CD4-positive, alpha-beta T cell (primary cell): ENCODE measurements at regions of chr5 and their contacts with region 1.

Region 1: DNA sequence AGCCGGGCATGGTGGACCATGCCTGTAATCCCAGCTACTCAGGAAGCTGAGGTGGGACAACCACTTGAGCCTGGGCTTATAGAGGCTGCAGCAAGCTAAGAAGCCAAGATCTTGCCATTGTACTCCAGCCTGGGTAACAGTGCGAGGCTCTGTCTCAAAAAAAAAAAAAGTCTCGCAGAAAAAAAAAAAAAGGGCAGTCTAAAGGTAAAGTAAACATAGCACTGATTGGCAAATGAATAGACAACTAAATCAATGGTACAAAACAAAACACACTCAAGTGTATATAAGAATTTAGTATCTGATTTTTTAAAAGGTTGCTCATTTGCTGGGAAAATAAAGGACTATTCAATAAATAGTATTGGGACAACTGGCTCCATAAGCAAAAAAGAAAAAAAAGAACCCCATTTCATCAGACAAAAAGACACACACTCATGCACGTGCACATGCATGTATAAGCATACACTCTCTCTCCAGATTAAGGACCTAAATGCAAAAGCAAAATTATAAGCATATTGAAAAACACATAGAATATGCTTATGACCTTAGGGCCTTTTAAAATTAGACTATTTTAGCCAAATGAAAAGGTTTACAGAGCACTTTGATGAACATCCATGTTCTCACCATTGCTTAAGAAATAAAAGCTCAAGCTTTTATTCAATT is 5.7 kb downstream of the IL6ST start:
- DNase-seq: peak in 1 of 14 experiments; percentile 28
- ATAC-seq: peak; percentile 30
- H3K4me3 ChIP-seq: peak overlapping the region; percentile 25
- H3K4me3 Mint-ChIP-seq: peak overlapping the region; percentile 97
- H3K27ac ChIP-seq: peak overlapping the region in 1 of 2 donors; percentile 26
- H3K27ac Mint-ChIP-seq: peak overlapping the region; percentile 94
- H3K4me1 ChIP-seq: peaks cover 24% of the 10 kb centered on the region
- H3K4me1 Mint-ChIP-seq: peaks cover 85% of the 10 kb centered on the region
- H3K27me3 ChIP-seq: no peaks in the 10 kb centered on the region
- H3K27me3 Mint-ChIP-seq: no peaks in the 10 kb centered on the region
- CTCF ChIP-seq: no peak

Region 2: GRCh38 chr5:55880453-55880852 is 108.7 kb before region 1 on chr5:
- CTCF ChIA-PET with region 1: no interaction called
- POLR2A ChIA-PET with region 1: no interaction called
- intact Hi-C with region 1: no loop called
- DNase-seq: no peak
- ATAC-seq: no peak
- H3K4me3 ChIP-seq: no peak overlapping the region
- H3K4me3 Mint-ChIP-seq: no peak overlapping the region
- H3K27ac ChIP-seq: no peak overlapping the region
- H3K27ac Mint-ChIP-seq: no peak overlapping the region
- H3K4me1 ChIP-seq: no peaks in the 10 kb centered on the region
- H3K4me1 Mint-ChIP-seq: no peaks in the 10 kb centered on the region
- H3K27me3 ChIP-seq: no peaks in the 10 kb centered on the region
- H3K27me3 Mint-ChIP-seq: no peaks in the 10 kb centered on the region
- CTCF ChIP-seq: no peak

Region 3: GRCh38 chr5:56095579-56096102 is 106.5 kb after region 1 on chr5:
- CTCF ChIA-PET with region 1: interaction called, 4 read pairs
- POLR2A ChIA-PET with region 1: interaction called, 38 read pairs
- intact Hi-C with region 1: no loop called
- DNase-seq: no peak
- ATAC-seq: no peak
- H3K4me3 ChIP-seq: no peak overlapping the region
- H3K4me3 Mint-ChIP-seq: peak overlapping the region; percentile 30
- H3K27ac ChIP-seq: peak overlapping the region; percentile 7 to 63
- H3K27ac Mint-ChIP-seq: peak overlapping the region; percentile 88
- H3K4me1 ChIP-seq: peaks cover 71% of the 10 kb centered on the region
- H3K4me1 Mint-ChIP-seq: peaks cover 88% of the 10 kb centered on the region
- H3K27me3 ChIP-seq: no peaks in the 10 kb centered on the region
- H3K27me3 Mint-ChIP-seq: no peaks in the 10 kb centered on the region
- CTCF ChIP-seq: no peak